ENCODE measurements at regions of chr17 and their contacts with region 1.

Region 1: GRCh38 chr17:71287071-71287823 is 833.6 kb upstream of the SOX9 start:
- DNase-seq: no peak
- ATAC-seq: no peak
- H3K4me3 ChIP-seq: no peak overlapping the region
- H3K4me3 Mint-ChIP-seq: no peak overlapping the region
- H3K27ac ChIP-seq: no peak overlapping the region
- H3K27ac Mint-ChIP-seq: no peak overlapping the region
- H3K4me1 ChIP-seq: no peaks in the 10 kb centered on the region
- H3K4me1 Mint-ChIP-seq: no peaks in the 10 kb centered on the region
- H3K27me3 ChIP-seq: no peaks in the 10 kb centered on the region
- H3K27me3 Mint-ChIP-seq: no peaks in the 10 kb centered on the region
- CTCF ChIP-seq: no peak

Region 2: GRCh38 chr17:70813355-70813930 is 473.8 kb before region 1 on chr17:
- CTCF ChIA-PET with region 1: no interaction called
- POLR2A ChIA-PET with region 1: no interaction called
- intact Hi-C with region 1: no loop called
- DNase-seq: no peak
- ATAC-seq: no peak
- H3K4me3 ChIP-seq: no peak overlapping the region
- H3K4me3 Mint-ChIP-seq: no peak overlapping the region
- H3K27ac ChIP-seq: no peak overlapping the region
- H3K27ac Mint-ChIP-seq: no peak overlapping the region
- H3K4me1 ChIP-seq: no peaks in the 10 kb centered on the region
- H3K4me1 Mint-ChIP-seq: no peaks in the 10 kb centered on the region
- H3K27me3 ChIP-seq: no peaks in the 10 kb centered on the region
- H3K27me3 Mint-ChIP-seq: no peaks in the 10 kb centered on the region
- CTCF ChIP-seq: no peak

Region 3: DNA sequence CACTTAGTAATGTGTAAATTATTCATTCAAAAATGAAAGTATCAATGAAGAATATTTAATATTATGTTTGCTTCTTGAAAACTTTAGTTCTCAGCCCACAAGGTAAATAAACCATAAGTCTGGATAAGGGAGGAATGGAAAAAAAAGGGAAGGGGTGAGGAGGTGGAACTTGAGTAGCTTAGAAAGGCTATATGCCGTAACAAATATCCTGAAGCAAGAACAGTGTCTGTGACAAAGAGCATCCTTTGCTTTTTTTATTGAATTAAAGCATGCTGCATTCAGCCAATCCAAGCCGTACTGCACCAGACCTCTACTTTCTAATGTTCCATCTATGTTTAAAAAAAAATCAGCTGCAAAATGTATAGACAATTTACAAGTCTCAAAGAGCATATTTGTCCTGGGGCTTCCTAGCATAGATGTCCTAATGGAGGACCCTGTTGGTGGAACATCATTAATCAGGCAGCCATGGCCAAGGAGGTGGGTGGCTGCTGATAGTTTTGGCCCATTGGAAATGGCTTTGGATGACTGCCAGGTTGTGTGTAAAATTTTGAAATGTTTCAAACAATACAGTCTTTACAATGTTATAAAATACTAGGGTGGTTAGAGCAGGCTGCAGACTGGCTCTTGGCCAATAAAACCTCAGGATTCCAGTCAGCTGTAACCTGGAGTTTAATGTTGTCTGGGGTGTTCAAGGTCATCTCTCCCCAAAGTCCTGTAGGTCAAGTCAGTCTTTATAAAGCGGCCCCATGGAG is 62.2 kb before region 1 on chr17:
- CTCF ChIA-PET with region 1: no interaction called
- POLR2A ChIA-PET with region 1: no interaction called
- intact Hi-C with region 1: loop called in 1 of 2 experiments (anchors 10 kb)
- DNase-seq: no peak
- ATAC-seq: no peak
- H3K4me3 ChIP-seq: no peak overlapping the region
- H3K4me3 Mint-ChIP-seq: no peak overlapping the region
- H3K27ac ChIP-seq: no peak overlapping the region
- H3K27ac Mint-ChIP-seq: no peak overlapping the region
- H3K4me1 ChIP-seq: no peaks in the 10 kb centered on the region
- H3K4me1 Mint-ChIP-seq: no peaks in the 10 kb centered on the region
- H3K27me3 ChIP-seq: no peaks in the 10 kb centered on the region
- H3K27me3 Mint-ChIP-seq: no peaks in the 10 kb centered on the region
- CTCF ChIP-seq: no peak

Region 4: DNA sequence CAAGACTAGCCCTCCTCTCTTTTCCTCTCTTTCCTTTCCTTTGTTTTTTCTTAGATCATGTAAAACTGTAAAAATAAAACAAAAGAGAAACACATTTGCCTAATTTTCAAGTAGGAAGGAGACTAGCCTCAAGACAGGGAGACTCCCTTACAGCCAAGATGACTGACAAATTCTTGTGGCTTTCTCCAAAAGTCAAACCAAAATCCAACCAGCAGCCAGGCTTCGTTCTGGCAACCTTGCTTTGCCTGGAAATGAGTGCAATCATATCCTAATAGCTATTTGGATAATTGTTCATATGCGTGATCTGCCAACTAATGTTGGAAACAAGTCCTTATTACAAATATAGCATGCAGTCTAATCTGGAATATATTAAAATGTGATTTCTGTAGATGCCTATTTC is 35.3 kb before region 1 on chr17:
- CTCF ChIA-PET with region 1: no interaction called
- POLR2A ChIA-PET with region 1: no interaction called
- intact Hi-C with region 1: loop called in 1 of 2 experiments (anchors 5 kb)
- DNase-seq: no peak
- ATAC-seq: no peak
- H3K4me3 ChIP-seq: no peak overlapping the region
- H3K4me3 Mint-ChIP-seq: no peak overlapping the region
- H3K27ac ChIP-seq: no peak overlapping the region
- H3K27ac Mint-ChIP-seq: no peak overlapping the region
- H3K4me1 ChIP-seq: no peaks in the 10 kb centered on the region
- H3K4me1 Mint-ChIP-seq: no peaks in the 10 kb centered on the region
- H3K27me3 ChIP-seq: no peaks in the 10 kb centered on the region
- H3K27me3 Mint-ChIP-seq: no peaks in the 10 kb centered on the region
- CTCF ChIP-seq: no peak

Region 5: DNA sequence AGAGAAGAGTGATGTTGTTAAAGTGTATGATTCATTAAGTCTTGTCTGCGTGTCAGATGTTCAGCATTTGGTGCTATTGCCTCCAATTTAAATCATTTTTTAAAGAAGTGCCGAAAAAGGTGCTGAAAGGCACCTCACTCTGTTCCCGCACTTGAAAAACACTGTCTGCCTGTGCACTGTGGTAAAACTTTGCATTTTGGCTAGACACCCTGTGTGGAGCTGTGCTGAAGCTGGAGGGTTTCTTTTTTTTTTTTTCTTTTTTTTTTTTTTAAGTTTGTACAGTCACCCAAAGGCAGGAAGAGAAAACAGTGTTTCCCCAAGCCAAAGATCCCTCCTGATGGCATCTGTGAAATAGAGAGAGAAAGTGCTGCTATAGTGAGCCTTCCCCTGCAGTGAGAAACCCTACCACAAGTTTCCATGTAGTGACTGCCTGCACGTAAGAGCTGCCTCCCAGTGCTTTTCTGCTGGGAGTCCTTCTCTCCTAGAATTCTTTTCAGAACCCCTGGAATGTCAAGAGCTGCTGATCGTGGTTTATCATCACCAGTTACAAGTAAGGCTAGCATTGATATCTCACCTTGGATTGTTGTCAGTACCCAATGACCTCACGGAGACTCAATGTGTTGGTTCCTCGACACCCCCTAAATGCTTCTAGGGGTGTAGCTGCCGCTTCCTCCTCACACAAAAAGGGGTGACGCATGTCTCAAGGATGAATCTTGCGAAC is 717.5 kb after region 1 on chr17:
- CTCF ChIA-PET with region 1: no interaction called
- POLR2A ChIA-PET with region 1: no interaction called
- intact Hi-C with region 1: no loop called
- DNase-seq: no peak
- ATAC-seq: no peak
- H3K4me3 ChIP-seq: no peak overlapping the region
- H3K4me3 Mint-ChIP-seq: no peak overlapping the region
- H3K27ac ChIP-seq: no peak overlapping the region
- H3K27ac Mint-ChIP-seq: no peak overlapping the region
- H3K4me1 ChIP-seq: no peaks in the 10 kb centered on the region
- H3K4me1 Mint-ChIP-seq: no peaks in the 10 kb centered on the region
- H3K27me3 ChIP-seq: no peaks in the 10 kb centered on the region
- H3K27me3 Mint-ChIP-seq: no peaks in the 10 kb centered on the region
- CTCF ChIP-seq: no peak